Naive thymus-derived CD4-positive, alpha-beta T cell (primary cell): ENCODE measurements at regions of chr3 and their contacts with region 1.

Region 1: GRCh38 chr3:14921078-14921616 is 26.2 kb upstream of the NR2C2 start:
- DNase-seq: peak; percentile 66 to 85 (median 80)
- ATAC-seq: peak; percentile 94
- H3K4me3 ChIP-seq: no peak overlapping the region
- H3K4me3 Mint-ChIP-seq: no peak overlapping the region
- H3K27ac ChIP-seq: no peak overlapping the region
- H3K27ac Mint-ChIP-seq: peak overlapping the region in 1 of 9 donors; percentile 11
- H3K4me1 ChIP-seq: no peaks in the 10 kb centered on the region
- H3K4me1 Mint-ChIP-seq: peaks cover 0 to 4% (median 0%) of the 10 kb centered on the region in 7 donors
- H3K27me3 ChIP-seq: no peaks in the 10 kb centered on the region
- H3K27me3 Mint-ChIP-seq: peaks cover 0 to 6% (median 0%) of the 10 kb centered on the region in 5 donors

Region 2: DNA sequence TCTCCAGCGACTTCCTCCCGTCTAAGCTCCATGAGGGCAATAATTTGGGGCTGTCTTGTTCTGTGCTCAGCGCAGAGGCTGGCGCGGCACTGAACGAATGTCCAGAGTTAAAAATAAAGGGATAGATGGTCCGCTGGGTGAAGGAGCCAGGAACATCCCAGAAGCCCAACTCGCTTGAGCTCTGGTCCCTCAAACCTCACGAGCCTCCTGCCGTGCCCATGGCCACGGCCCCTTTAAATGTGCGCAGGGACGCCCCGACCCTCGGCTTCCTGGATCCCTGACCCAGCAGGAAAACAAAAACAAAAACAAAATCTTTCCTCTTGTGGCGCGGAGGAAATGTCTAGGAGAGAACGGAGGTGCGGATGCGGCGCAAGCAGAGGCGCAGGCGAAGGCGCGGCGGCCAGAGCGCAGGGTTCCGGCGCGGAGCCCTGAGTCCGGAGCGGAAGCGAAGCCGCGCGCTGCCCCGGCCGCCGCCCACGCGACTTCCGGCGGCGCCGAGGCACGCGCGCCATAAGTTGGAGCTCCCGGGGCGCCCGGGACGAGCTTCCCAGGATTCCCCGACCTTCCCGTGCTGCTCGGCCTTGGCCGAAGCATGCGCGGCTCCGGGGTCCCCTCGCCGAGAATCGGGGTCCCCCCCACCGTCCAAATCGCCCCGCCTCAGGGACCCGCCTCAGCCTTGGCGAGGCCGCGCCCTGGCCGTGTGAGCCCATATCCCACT is 988.4 kb before region 1 on chr3:
- CTCF ChIA-PET with region 1: no interaction called
- POLR2A ChIA-PET with region 1: no interaction called
- intact Hi-C with region 1: no loop called
- DNase-seq: no peak
- ATAC-seq: no peak
- H3K4me3 ChIP-seq: peak overlapping the region; percentile 27
- H3K4me3 Mint-ChIP-seq: peak overlapping the region; percentile 59 to 83 (median 68)
- H3K27ac ChIP-seq: no peak overlapping the region
- H3K27ac Mint-ChIP-seq: peak overlapping the region in 1 of 9 donors; percentile 52
- H3K4me1 ChIP-seq: peaks cover 0 to 5% of the 10 kb centered on the region in 2 donors
- H3K4me1 Mint-ChIP-seq: peaks cover 0 to 5% (median 3%) of the 10 kb centered on the region in 7 donors
- H3K27me3 ChIP-seq: peaks cover 0 to 3% of the 10 kb centered on the region in 2 donors
- H3K27me3 Mint-ChIP-seq: peaks cover 0 to 54% (median 29%) of the 10 kb centered on the region in 5 donors

Region 3: GRCh38 chr3:14203521-14204079 is 717.5 kb before region 1 on chr3:
- CTCF ChIA-PET with region 1: interaction called, 3 read pairs
- POLR2A ChIA-PET with region 1: no interaction called
- intact Hi-C with region 1: loop called (anchors 1 to 10 kb)
- DNase-seq: peak in 6 of 9 donors; percentile 27 to 41 (median 33)
- ATAC-seq: peak; percentile 80
- H3K4me3 ChIP-seq: no peak overlapping the region
- H3K4me3 Mint-ChIP-seq: no peak overlapping the region
- H3K27ac ChIP-seq: no peak overlapping the region
- H3K27ac Mint-ChIP-seq: peak overlapping the region in 4 of 9 donors; percentile 12 to 83 (median 55)
- H3K4me1 ChIP-seq: peaks cover 0 to 5% of the 10 kb centered on the region in 2 donors
- H3K4me1 Mint-ChIP-seq: peaks cover 0 to 7% (median 5%) of the 10 kb centered on the region in 7 donors
- H3K27me3 ChIP-seq: no peaks in the 10 kb centered on the region
- H3K27me3 Mint-ChIP-seq: no peaks in the 10 kb centered on the region

Region 4: DNA sequence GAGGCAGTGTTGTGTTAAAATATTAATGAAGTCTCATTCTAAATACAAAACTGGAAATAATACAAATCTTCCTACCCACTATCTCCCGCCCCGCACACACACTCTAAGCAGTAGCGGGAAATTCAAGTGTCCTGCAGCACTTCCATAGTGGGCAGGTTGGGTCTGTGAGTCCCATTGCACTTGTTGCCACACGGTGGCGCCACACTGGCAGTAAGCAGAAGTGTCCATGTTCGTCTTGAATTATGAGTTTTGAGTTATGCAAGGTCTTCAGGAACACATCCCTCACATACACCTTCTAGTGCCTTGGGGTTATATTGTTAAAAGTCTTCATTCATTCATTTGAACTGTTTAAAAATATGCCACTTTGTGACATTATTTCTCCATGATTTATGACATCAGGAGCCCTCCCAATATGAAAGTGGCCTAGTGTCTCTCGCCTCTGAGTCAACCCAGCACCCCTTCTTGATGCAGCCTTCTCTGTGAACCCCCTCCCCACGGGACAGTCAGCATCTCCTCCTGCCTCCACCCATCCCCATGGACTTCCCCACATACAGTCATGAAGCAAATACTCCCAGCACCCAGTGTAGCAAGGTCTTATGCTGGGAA is 287.2 kb before region 1 on chr3:
- CTCF ChIA-PET with region 1: interaction called, 36 read pairs
- POLR2A ChIA-PET with region 1: no interaction called
- intact Hi-C with region 1: loop called (anchors 1 kb)
- DNase-seq: peak; percentile 24 to 63 (median 47)
- ATAC-seq: peak; percentile 82
- H3K4me3 ChIP-seq: no peak overlapping the region
- H3K4me3 Mint-ChIP-seq: no peak overlapping the region
- H3K27ac ChIP-seq: no peak overlapping the region
- H3K27ac Mint-ChIP-seq: no peak overlapping the region
- H3K4me1 ChIP-seq: no peaks in the 10 kb centered on the region
- H3K4me1 Mint-ChIP-seq: peaks cover 0 to 2% (median 0%) of the 10 kb centered on the region in 7 donors
- H3K27me3 ChIP-seq: no peaks in the 10 kb centered on the region
- H3K27me3 Mint-ChIP-seq: peaks cover 16 to 46% (median 21%) of the 10 kb centered on the region in 5 donors

Region 5: DNA sequence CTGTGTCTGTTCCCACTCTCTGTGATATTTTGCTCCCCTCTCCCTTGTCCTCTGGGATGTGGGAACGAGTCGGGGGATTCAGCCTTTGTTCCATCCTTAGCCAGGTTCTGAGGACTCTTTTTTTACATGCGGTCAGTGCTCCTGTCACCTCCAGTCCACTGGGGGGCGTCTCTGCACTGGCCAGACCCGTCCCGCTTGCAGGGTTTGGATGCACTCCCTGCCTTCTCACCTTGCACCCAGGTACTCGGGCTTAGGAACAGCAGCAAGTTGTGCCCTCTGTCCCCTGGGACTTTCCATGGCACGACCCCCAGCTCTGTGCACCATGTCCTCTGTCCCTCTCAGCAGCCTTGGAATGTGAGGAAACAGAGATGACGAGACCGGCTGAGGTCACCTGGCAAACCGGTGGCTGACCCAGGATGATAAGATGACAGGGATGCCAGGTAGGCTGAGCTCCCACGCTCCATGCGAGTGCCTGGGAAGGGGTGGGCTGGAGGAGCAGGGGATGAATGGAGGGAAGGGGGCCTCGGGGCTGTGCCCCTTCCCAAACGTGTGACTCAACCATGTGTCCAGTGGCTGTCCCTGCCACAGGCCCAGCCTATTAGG is 129.7 kb before region 1 on chr3:
- CTCF ChIA-PET with region 1: interaction called, 11 read pairs
- POLR2A ChIA-PET with region 1: no interaction called
- intact Hi-C with region 1: loop called (anchors 1 kb)
- DNase-seq: peak; percentile 23 to 54 (median 33)
- ATAC-seq: peak; percentile 62
- H3K4me3 ChIP-seq: no peak overlapping the region
- H3K4me3 Mint-ChIP-seq: no peak overlapping the region
- H3K27ac ChIP-seq: no peak overlapping the region
- H3K27ac Mint-ChIP-seq: peak overlapping the region in 2 of 9 donors; percentile 14 to 49
- H3K4me1 ChIP-seq: no peaks in the 10 kb centered on the region
- H3K4me1 Mint-ChIP-seq: peaks cover 0 to 4% (median 0%) of the 10 kb centered on the region in 7 donors
- H3K27me3 ChIP-seq: no peaks in the 10 kb centered on the region
- H3K27me3 Mint-ChIP-seq: peaks cover 7 to 29% (median 26%) of the 10 kb centered on the region in 5 donors

Region 6: DNA sequence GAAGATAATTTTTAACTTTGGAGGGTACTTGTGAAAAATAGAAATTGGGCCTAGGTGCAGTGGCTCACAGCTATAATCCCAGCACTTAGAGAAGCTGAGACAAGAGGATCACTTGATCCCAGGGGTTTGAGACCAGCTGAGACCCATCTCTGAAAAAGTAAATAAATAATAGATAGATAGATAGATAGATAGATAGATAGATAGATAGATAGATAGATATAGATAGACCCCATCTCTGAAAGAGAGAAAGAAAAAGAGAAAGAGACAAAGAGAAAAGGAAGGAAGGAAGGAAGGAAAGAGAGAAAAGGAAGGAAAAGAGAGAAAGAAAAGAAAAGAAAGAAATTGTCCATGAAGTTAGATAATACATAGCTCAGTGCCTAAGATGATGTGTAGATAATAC is 108.5 kb after region 1 on chr3:
- CTCF ChIA-PET with region 1: interaction called, 3 read pairs
- POLR2A ChIA-PET with region 1: no interaction called
- intact Hi-C with region 1: loop called in 1 of 2 experiments (anchors 5 kb)
- DNase-seq: no peak
- ATAC-seq: no peak
- H3K4me3 ChIP-seq: no peak overlapping the region
- H3K4me3 Mint-ChIP-seq: no peak overlapping the region
- H3K27ac ChIP-seq: no peak overlapping the region
- H3K27ac Mint-ChIP-seq: peak overlapping the region in 2 of 9 donors; percentile 55 to 61
- H3K4me1 ChIP-seq: no peaks in the 10 kb centered on the region
- H3K4me1 Mint-ChIP-seq: peaks cover 0 to 3% (median 0%) of the 10 kb centered on the region in 7 donors
- H3K27me3 ChIP-seq: no peaks in the 10 kb centered on the region
- H3K27me3 Mint-ChIP-seq: no peaks in the 10 kb centered on the region

Region 7: GRCh38 chr3:15405448-15406050 is 484.4 kb after region 1 on chr3:
- CTCF ChIA-PET with region 1: no interaction called
- POLR2A ChIA-PET with region 1: no interaction called
- intact Hi-C with region 1: loop called in 1 of 2 experiments (anchors 1 kb)
- DNase-seq: peak in 7 of 9 donors; percentile 28 to 63 (median 49)
- ATAC-seq: peak; percentile 75
- H3K4me3 ChIP-seq: no peak overlapping the region
- H3K4me3 Mint-ChIP-seq: no peak overlapping the region
- H3K27ac ChIP-seq: no peak overlapping the region
- H3K27ac Mint-ChIP-seq: no peak overlapping the region
- H3K4me1 ChIP-seq: peaks cover 0 to under 1% of the 10 kb centered on the region in 2 donors
- H3K4me1 Mint-ChIP-seq: peaks cover 0 to 7% (median 1%) of the 10 kb centered on the region in 7 donors
- H3K27me3 ChIP-seq: no peaks in the 10 kb centered on the region
- H3K27me3 Mint-ChIP-seq: no peaks in the 10 kb centered on the region